ENCODE measurements at regions of chr12 and their contacts with region 1.

Region 1: DNA sequence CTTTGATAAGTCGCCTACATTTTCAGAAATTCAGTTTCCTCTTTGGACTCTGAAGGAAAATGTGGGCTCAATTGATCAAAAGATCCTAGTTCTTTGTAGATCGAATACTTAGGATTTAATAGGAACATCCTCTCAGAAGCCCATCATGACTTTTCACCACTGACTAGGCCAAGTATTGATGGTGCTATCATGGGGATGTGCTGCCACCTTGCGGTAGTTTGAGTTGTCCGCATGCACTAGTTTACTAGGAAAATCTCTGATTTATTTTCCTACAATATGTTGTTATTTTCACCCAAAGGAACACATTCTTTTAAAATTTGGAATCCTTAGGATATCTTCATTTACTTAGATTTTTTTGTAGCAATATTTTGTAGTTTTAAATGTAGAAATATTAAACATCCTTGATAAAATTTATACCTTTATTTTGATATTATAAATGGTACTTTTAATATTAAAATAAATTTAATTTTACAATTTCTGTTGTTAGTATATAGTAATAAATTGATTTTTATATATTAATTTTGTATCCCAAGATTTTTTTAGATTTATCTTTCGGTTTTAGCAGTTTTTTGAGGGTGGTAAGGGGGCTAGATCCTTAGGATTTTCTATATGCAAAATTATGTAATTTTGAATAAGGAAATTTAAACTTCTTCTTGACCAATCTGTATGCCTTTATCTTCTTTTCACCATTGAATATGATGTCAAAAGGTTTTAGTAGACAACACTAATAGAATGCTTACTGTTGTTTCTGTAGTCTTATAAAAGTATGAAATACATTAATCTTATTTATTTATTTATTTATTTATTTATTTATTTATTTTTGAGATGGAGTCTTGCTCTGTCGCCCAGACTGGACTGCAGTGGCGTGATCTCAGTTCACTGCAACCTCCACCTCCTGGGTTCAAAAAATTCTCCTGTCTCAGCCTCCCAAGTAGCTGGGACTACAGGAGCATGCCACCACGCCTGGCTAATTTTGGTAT is 52.9 kb upstream of the OR9K2 start:
- DNase-seq: peak; percentile 83
- ATAC-seq: peak; percentile 66
- H3K4me3 Mint-ChIP-seq: no peak overlapping the region
- H3K27ac Mint-ChIP-seq: no peak overlapping the region
- H3K4me1 Mint-ChIP-seq: peaks cover 1% of the 10 kb centered on the region
- H3K27me3 Mint-ChIP-seq: peaks cover 35% of the 10 kb centered on the region

Region 2: GRCh38 chr12:54701940-54702592 is 371.3 kb before region 1 on chr12:
- CTCF ChIA-PET with region 1: interaction called, 39 read pairs
- DNase-seq: no peak
- ATAC-seq: peak; percentile 51
- H3K4me3 Mint-ChIP-seq: no peak overlapping the region
- H3K27ac Mint-ChIP-seq: no peak overlapping the region
- H3K4me1 Mint-ChIP-seq: no peaks in the 10 kb centered on the region
- H3K27me3 Mint-ChIP-seq: peaks cover 19% of the 10 kb centered on the region

Region 3: GRCh38 chr12:54759751-54760150 is 313.6 kb before region 1 on chr12:
- CTCF ChIA-PET with region 1: interaction called, 14 read pairs
- DNase-seq: no peak
- ATAC-seq: peak; percentile 61
- H3K4me3 Mint-ChIP-seq: no peak overlapping the region
- H3K27ac Mint-ChIP-seq: no peak overlapping the region
- H3K4me1 Mint-ChIP-seq: peaks cover 8% of the 10 kb centered on the region
- H3K27me3 Mint-ChIP-seq: peaks cover 4% of the 10 kb centered on the region

Region 4: DNA sequence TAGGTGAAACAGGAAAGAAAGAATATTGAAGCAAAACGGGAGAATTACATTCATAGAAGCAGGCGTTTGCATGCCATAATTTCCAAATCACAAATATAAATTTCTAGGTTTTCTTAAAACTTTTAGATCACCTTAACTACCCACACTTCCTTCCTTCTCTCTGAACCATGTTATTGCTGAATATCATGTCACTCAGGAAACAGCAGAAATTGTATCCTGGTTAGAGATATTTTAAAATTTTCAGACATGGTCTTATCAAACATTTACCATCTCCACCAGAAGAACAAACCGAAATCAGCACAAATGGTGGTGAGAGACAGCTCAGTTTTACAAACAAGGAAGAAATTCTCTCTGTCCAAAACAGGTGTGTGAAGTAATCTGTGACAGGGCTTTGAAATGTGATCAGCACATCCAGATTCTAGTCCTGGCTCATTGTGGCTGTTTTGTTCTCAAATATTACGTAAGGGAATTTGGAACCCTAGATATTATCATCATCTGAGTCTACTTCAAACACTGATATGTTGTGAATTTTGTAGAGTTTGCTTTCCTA is 105.1 kb before region 1 on chr12:
- CTCF ChIA-PET with region 1: interaction called, 17 read pairs
- DNase-seq: no peak
- ATAC-seq: no peak
- H3K4me3 Mint-ChIP-seq: no peak overlapping the region
- H3K27ac Mint-ChIP-seq: peak overlapping the region; percentile 50
- H3K4me1 Mint-ChIP-seq: peaks cover 25% of the 10 kb centered on the region
- H3K27me3 Mint-ChIP-seq: no peaks in the 10 kb centered on the region

Region 5: DNA sequence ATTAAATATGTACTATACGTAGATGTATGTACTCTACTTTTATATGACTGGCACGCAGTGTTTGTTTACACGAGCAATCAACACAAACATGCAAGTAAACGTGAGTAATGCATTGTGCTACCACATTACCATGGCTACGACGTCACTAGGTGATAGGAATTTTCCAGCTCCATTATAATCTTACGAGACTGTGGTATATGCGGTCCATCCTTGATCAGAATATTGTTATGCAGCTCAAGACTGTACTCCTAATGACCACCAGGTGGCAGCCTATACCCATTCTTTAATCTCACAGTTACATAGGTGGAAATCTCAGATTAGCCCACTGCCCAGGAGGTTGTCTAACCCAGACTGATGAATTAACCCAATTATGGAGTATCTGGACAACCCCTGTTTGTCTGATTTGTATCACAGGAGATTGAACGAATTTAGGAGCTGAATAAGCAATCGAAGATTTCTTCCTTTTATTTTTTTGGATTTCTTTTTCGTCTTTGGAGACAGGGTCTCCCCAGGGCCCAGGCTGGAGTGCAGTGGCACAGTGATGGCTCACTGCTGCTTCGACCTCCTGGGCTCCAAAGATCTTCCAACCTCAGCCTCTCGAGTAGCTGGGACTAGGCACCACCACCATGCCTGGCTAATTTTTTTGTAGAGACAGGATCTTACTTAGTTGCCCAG is 80.0 kb before region 1 on chr12:
- CTCF ChIA-PET with region 1: interaction called, 528 read pairs
- DNase-seq: peak; percentile 68
- ATAC-seq: peak; percentile 75
- H3K4me3 Mint-ChIP-seq: no peak overlapping the region
- H3K27ac Mint-ChIP-seq: no peak overlapping the region
- H3K4me1 Mint-ChIP-seq: peaks cover 37% of the 10 kb centered on the region
- H3K27me3 Mint-ChIP-seq: no peaks in the 10 kb centered on the region

Region 6: GRCh38 chr12:55063291-55063690 is 10.0 kb before region 1 on chr12:
- CTCF ChIA-PET with region 1: interaction called, 10 read pairs
- DNase-seq: no peak
- ATAC-seq: no peak
- H3K4me3 Mint-ChIP-seq: no peak overlapping the region
- H3K27ac Mint-ChIP-seq: no peak overlapping the region
- H3K4me1 Mint-ChIP-seq: peaks cover 13% of the 10 kb centered on the region
- H3K27me3 Mint-ChIP-seq: peaks cover 17% of the 10 kb centered on the region

Region 7: DNA sequence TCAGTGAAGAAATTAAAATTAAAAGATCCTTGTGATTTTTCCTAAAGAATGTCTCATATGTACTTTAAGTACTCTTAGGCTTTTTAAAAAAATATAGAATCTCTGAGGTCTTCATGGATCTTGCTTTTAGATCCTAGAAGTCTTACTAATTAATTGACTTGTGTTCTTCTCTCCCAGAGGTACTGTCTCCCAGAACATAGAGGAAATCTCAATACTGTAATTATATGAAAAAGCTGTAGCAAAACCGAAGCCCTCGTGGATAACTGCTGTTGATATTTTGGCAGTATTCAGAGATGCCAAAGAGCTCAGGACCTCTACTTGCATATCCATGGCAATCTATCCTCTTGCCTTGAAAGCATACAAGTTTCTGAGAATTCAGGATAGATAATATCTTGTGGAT is 52.8 kb after region 1 on chr12 and contains the start of gene OR9K2:
- CTCF ChIA-PET with region 1: no interaction called
- DNase-seq: no peak
- ATAC-seq: no peak
- H3K4me3 Mint-ChIP-seq: no peak within 1 kb of the TSS
- H3K27ac Mint-ChIP-seq: no peak within 1 kb of the TSS
- H3K4me1 Mint-ChIP-seq: no peaks in the 10 kb centered on the region
- H3K27me3 Mint-ChIP-seq: peaks cover 29% of the 10 kb centered on the region
- total RNA-seq, gene OR9K2: not detected

Region 8: GRCh38 chr12:55188573-55188972 is 115.2 kb after region 1 on chr12:
- CTCF ChIA-PET with region 1: no interaction called
- DNase-seq: no peak
- ATAC-seq: no peak
- H3K4me3 Mint-ChIP-seq: no peak overlapping the region
- H3K27ac Mint-ChIP-seq: no peak overlapping the region
- H3K4me1 Mint-ChIP-seq: no peaks in the 10 kb centered on the region
- H3K27me3 Mint-ChIP-seq: peaks cover 12% of the 10 kb centered on the region